Panc1 (cell line): ENCODE measurements at regions of chr3 and their contacts with region 1.

Region 1: DNA sequence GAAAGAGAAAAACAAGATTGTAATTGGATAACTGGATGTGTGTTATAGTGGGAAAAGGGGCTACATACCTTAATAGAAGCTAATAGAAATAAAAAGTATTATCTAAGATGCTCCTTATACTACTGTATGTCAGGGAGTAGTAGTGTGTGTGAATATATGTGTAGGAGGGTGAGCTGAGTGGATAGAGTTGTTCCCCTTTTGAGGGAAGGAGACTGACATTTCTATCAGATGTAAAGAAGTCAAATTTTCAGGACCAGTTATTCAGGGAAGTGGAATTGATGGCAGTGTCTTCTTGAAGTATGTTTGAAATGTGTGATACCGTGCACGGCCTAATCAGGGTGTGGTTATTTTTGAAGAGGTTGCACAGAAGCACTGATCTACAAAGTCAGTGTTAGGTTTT is 49.1 kb downstream of the PCOLCE2 start:
- DNase-seq: no peak
- ATAC-seq: no peak
- H3K4me3 ChIP-seq: no peak overlapping the region
- H3K27ac ChIP-seq: no peak overlapping the region
- H3K4me1 ChIP-seq: no peaks in the 10 kb centered on the region
- H3K27me3 ChIP-seq: no peaks in the 10 kb centered on the region
- CTCF ChIP-seq: no peak

Region 2: DNA sequence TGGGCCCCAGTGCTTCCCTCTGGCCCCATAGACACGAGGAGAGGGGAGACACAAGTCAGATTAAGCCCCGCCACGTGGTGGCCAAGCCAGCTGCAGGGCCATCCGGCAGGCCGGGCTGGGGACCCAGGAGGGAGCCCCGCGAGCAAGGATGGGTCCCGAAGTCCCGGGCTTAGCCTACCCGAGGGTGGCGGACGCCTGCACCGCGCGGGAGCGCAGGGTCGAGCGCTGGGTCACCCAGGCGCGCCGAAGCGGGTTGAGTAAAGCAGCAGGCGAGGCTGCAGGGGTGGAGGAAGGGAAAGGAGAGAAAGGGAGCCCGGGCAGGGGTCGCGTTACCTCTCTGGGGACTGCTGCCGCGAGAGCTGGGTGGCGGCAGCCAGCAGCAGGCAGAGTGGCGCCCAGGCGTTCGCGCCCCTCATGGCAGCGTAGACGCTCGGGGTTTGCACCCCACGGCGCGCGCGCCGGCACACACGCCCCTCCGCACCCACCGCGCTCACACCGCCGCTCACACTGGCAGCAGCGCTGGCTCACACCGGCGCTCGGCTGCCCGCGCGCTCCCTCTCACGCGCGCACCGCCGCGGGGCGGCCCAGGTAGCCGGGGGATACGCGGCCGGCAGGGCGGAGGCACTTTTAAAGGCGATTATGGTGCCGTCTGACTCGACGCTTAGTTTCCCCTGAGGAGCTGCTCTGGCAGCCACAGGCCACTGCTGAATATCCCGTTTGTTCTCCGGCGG is 48.8 kb after region 1 on chr3 and contains the start of gene PCOLCE2:
- CTCF ChIA-PET with region 1: no interaction called
- POLR2A ChIA-PET with region 1: no interaction called
- in situ Hi-C with region 1: no loop called
- intact Hi-C with region 1: no loop called
- DNase-seq: no peak
- ATAC-seq: peak; percentile 88
- H3K4me3 ChIP-seq: peak within 1 kb of the TSS; percentile 62 to 70
- H3K27ac ChIP-seq: peak within 1 kb of the TSS; percentile 73
- H3K4me1 ChIP-seq: peaks cover 16% of the 10 kb centered on the region
- H3K27me3 ChIP-seq: no peaks in the 10 kb centered on the region
- CTCF ChIP-seq: no peak
- total RNA-seq, gene PCOLCE2: 14.6 TPM

Region 3: GRCh38 chr3:142902356-142902755 is 62.5 kb after region 1 on chr3:
- CTCF ChIA-PET with region 1: interaction called, 10 read pairs
- POLR2A ChIA-PET with region 1: no interaction called
- in situ Hi-C with region 1: no loop called
- intact Hi-C with region 1: no loop called
- DNase-seq: no peak
- ATAC-seq: no peak
- H3K4me3 ChIP-seq: no peak overlapping the region
- H3K27ac ChIP-seq: no peak overlapping the region
- H3K4me1 ChIP-seq: no peaks in the 10 kb centered on the region
- H3K27me3 ChIP-seq: peaks cover 3% of the 10 kb centered on the region
- CTCF ChIP-seq: no peak